ENCODE measurements at regions of chr21 and their contacts with region 1.

Region 1: GRCh38 chr21:33924079-33924765 is 8.6 kb upstream of the ATP5PO start:
- DNase-seq: peak; percentile 82 to 98 (median 91)
- ATAC-seq: peak; percentile 96
- H3K4me3 ChIP-seq: no peak overlapping the region
- H3K4me3 Mint-ChIP-seq: no peak overlapping the region
- H3K27ac ChIP-seq: no peak overlapping the region
- H3K27ac Mint-ChIP-seq: peak overlapping the region; percentile 61
- H3K4me1 ChIP-seq: peaks cover 11% of the 10 kb centered on the region
- H3K4me1 Mint-ChIP-seq: peaks cover 12% of the 10 kb centered on the region
- H3K27me3 ChIP-seq: no peaks in the 10 kb centered on the region
- H3K27me3 Mint-ChIP-seq: no peaks in the 10 kb centered on the region
- CTCF ChIP-seq: peak; percentile 88

Region 2: DNA sequence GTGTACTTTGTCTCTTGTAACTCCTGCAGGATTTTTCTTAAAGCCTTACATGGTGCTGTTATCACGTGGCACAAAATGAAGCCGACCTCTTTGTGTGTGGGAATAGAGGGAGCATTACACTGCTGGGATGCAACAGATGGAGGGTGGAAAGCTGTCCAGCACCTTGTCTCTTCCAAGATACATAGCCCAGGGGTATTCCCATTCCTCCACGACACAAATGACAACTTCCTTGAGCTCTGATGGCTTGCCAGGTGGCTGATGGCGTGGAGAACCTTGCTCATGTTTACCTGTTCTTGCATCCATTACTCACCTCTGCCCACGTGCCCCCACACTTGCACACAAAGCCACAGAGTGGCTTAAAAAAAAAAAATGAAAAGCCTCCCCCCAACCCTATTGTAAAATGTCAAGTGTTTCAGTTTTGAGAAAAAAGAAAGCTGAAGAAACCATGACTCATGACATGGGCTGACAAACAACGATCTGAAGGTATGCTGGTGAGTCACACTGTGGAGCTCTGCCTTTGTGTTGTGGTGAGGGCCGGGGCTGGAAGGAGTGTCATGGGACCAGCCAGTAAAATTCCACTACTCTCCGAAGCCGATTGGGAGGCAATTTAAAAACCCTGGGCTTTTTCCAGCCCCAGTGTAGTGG is 23.4 kb after region 1 on chr21:
- CTCF ChIA-PET with region 1: interaction called, 114 read pairs
- POLR2A ChIA-PET with region 1: interaction called, 60 read pairs
- intact Hi-C with region 1: no loop called
- DNase-seq: peak; percentile 68 to 97 (median 80)
- ATAC-seq: peak; percentile 59
- H3K4me3 ChIP-seq: peak overlapping the region; percentile 36
- H3K4me3 Mint-ChIP-seq: peak overlapping the region; percentile 65
- H3K27ac ChIP-seq: peak overlapping the region; percentile 93 to 98
- H3K27ac Mint-ChIP-seq: peak overlapping the region; percentile 93
- H3K4me1 ChIP-seq: peaks cover 76% of the 10 kb centered on the region
- H3K4me1 Mint-ChIP-seq: peaks cover 75% of the 10 kb centered on the region
- H3K27me3 ChIP-seq: no peaks in the 10 kb centered on the region
- H3K27me3 Mint-ChIP-seq: no peaks in the 10 kb centered on the region
- CTCF ChIP-seq: no peak

Region 3: DNA sequence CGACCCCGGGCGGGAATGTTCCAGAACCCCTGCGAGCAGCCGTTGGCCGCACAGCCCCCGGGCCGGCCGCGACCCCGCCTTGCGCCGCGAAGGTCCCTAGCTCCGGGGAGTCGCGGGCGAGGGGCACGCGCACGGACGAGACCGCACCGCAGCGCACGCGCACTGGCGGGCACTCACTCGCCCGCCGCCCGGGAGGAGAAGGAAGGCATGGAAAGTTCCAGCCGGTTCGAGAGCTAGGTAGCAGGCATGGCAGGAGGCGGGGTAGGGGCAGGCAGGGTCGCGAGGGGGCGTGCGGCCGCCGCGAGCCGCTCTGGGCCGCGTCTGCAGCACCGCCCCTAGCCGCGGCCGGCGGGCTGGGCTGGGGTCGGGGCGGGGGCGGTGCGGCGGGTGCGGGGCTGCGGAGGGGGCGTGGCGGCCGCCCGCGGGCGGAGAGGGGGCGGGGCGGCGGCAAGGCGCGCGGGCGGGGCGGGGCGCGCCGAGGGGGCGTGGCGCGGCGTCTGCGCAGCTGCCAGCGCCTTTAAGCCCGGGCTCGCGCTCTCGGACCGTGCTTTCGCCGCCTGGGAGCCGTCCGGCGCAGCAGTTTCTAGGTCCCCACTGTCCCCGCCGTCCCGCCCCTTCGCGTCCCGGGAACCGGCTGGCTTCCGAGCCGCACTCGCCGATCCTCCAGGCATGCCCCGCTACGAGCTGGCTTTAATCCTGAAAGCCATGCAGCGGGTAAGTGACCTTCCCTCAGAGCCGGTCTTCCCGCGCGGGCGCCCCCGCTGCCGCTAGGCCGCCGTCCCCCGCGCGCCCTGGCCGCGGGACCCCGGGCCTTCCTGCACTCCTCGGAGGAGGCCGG is 149.0 kb after region 1 on chr21 and contains the starts of genes MRPS6 and SLC5A3:
- CTCF ChIA-PET with region 1: interaction called, 34 read pairs
- POLR2A ChIA-PET with region 1: interaction called, 14 read pairs
- intact Hi-C with region 1: loop called (anchors 2 to 5 kb)
- DNase-seq: peak; percentile 40 to 91 (median 64)
- ATAC-seq: peak; percentile 66
- H3K4me3 ChIP-seq: peak within 1 kb of the TSS; percentile 74
- H3K4me3 Mint-ChIP-seq: peak within 1 kb of the TSS; percentile 95
- H3K27ac ChIP-seq: peak within 1 kb of the TSS; percentile 56 to 70
- H3K27ac Mint-ChIP-seq: peak within 1 kb of the TSS; percentile 88
- H3K4me1 ChIP-seq: peaks cover 34% of the 10 kb centered on the region
- H3K4me1 Mint-ChIP-seq: peaks cover 50% of the 10 kb centered on the region
- H3K27me3 ChIP-seq: no peaks in the 10 kb centered on the region
- H3K27me3 Mint-ChIP-seq: no peaks in the 10 kb centered on the region
- CTCF ChIP-seq: no peak
- total RNA-seq, gene MRPS6: 13.5 to 14.4 TPM
- total RNA-seq, gene SLC5A3: 4.6 to 4.9 TPM

Region 4: DNA sequence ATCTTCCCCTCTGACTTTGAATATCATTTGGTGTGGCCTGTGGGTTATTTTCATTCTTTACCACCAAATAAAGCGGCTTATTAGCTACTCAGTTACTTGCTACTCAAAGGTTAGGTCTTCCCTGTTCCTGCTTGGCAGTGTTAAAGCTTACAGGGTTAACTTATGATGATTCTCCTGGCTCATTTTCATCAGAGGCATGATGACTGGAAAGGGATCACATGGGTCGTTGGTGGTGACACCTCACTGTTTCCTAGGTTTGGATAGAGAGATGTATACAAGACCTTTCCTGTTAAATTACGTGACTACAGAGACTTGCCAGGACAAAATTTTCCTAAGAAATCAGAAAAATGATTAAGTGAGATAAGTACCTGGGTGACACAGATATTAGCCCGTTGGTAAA is 176.6 kb after region 1 on chr21:
- CTCF ChIA-PET with region 1: interaction called, 11 read pairs
- POLR2A ChIA-PET with region 1: no interaction called
- intact Hi-C with region 1: no loop called
- DNase-seq: no peak
- ATAC-seq: no peak
- H3K4me3 ChIP-seq: no peak overlapping the region
- H3K4me3 Mint-ChIP-seq: no peak overlapping the region
- H3K27ac ChIP-seq: no peak overlapping the region
- H3K27ac Mint-ChIP-seq: peak overlapping the region; percentile 25
- H3K4me1 ChIP-seq: peaks cover 2% of the 10 kb centered on the region
- H3K4me1 Mint-ChIP-seq: peaks cover 97% of the 10 kb centered on the region
- H3K27me3 ChIP-seq: no peaks in the 10 kb centered on the region
- H3K27me3 Mint-ChIP-seq: no peaks in the 10 kb centered on the region
- CTCF ChIP-seq: no peak

Region 5: DNA sequence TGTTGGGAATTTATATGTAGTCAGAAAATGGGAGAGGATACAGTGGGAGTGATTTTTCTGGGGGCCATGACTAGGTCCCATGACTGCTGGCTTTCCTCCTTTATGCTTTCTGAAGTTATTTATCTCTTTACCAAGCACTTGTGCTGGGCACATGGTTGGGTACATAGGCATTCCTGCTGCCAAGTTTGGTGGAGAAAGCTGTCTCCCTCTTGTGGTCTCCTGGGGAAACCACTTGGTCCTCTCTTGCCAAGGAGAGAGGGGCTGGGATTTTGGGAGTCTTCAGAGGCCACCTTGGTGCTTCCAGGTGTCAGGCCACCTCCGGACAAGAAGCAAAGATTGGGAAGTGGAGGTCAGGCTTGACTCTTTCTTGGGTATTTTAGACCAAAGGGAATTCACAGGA is 319.3 kb after region 1 on chr21:
- CTCF ChIA-PET with region 1: interaction called, 6 read pairs
- POLR2A ChIA-PET with region 1: no interaction called
- intact Hi-C with region 1: loop called (anchors 2 kb)
- DNase-seq: peak in 5 of 14 experiments; percentile 11 to 52 (median 43)
- ATAC-seq: no peak
- H3K4me3 ChIP-seq: no peak overlapping the region
- H3K4me3 Mint-ChIP-seq: no peak overlapping the region
- H3K27ac ChIP-seq: no peak overlapping the region
- H3K27ac Mint-ChIP-seq: no peak overlapping the region
- H3K4me1 ChIP-seq: no peaks in the 10 kb centered on the region
- H3K4me1 Mint-ChIP-seq: no peaks in the 10 kb centered on the region
- H3K27me3 ChIP-seq: no peaks in the 10 kb centered on the region
- H3K27me3 Mint-ChIP-seq: no peaks in the 10 kb centered on the region
- CTCF ChIP-seq: peak; percentile 35

Region 6: DNA sequence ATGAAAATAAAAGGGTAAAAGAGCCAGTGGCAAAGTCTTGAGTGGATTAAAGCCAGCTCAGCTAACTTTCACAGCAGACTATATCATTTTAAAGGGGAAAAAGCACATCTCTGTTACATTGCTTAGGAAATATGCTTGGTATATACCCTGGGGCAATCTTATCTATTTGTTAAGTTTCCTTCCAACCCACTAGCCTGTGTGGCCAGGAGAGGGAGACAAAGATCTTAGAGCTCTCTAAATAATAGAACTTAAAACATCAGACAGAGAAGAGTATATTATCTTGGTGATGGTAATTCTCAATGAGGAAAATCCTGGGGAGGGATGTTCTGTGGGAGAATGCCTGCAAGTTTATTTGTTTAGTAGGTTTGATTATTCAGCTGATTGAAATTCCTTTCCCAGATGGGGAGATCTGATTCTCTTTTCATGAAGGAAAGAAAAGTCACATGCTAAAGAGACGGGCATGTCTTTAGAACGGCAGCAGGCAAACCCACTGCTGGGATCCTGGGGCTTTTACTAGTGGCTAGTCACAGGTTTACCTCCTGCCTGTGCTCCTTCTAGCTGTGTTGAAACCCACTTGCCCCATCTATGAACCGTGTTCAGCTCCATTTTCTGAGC is 443.2 kb after region 1 on chr21:
- CTCF ChIA-PET with region 1: interaction called, 12 read pairs
- POLR2A ChIA-PET with region 1: no interaction called
- intact Hi-C with region 1: no loop called
- DNase-seq: peak in 11 of 14 experiments; percentile 6 to 71 (median 34)
- ATAC-seq: peak; percentile 95
- H3K4me3 ChIP-seq: no peak overlapping the region
- H3K4me3 Mint-ChIP-seq: no peak overlapping the region
- H3K27ac ChIP-seq: no peak overlapping the region
- H3K27ac Mint-ChIP-seq: no peak overlapping the region
- H3K4me1 ChIP-seq: no peaks in the 10 kb centered on the region
- H3K4me1 Mint-ChIP-seq: no peaks in the 10 kb centered on the region
- H3K27me3 ChIP-seq: no peaks in the 10 kb centered on the region
- H3K27me3 Mint-ChIP-seq: peaks cover 12% of the 10 kb centered on the region
- CTCF ChIP-seq: peak; percentile 66

Region 7: DNA sequence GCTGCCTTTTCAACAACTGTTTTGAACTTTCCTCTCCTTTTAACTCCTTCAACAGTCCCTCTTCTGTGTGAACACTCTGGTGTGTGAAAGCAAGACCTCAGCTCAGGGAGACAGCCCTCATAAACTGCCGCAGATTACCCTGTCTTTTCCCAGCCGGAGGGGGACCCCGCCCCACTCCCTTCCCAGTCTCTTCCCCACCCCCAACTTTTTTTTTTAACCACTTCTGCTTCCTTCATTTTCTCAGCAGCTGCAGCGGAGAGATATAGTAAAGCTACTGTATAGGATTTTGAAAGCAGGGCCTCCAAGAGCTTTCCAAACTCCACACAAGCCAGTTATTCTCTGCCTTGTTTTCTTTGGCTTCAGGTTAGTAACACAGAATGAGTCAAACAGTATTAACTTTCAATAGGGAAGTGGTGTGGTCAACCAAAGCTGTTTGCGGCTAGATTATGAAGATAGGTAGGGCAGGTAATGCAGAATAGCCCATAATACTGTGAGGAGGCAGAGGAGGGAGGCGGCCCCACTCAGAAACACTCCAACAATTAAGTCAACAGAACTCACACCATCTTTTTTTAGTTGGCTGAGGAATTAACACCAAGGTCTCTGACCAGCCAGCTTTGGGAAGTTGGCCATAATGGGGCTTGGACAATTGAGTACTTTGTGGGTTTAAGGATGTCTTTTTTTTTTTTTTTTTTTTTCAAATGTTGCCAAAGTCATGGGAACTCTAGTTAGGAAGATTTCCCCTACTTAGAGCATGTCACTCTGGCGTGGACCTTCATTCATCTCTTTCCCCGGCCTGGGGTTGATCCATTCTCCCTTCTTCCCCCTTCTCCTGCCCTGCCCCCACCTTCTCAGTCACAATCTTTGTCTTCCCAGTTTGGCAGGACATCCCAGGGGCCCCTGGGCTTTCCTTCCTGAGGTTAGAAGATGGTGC is 921.6 kb after region 1 on chr21:
- CTCF ChIA-PET with region 1: no interaction called
- POLR2A ChIA-PET with region 1: no interaction called
- intact Hi-C with region 1: no loop called
- DNase-seq: peak in 5 of 14 experiments; percentile 8 to 63 (median 53)
- ATAC-seq: peak; percentile 51
- H3K4me3 ChIP-seq: no peak overlapping the region
- H3K4me3 Mint-ChIP-seq: peak overlapping the region; percentile 4
- H3K27ac ChIP-seq: no peak overlapping the region
- H3K27ac Mint-ChIP-seq: peak overlapping the region; percentile 78
- H3K4me1 ChIP-seq: peaks cover 35% of the 10 kb centered on the region
- H3K4me1 Mint-ChIP-seq: peaks cover 42% of the 10 kb centered on the region
- H3K27me3 ChIP-seq: no peaks in the 10 kb centered on the region
- H3K27me3 Mint-ChIP-seq: no peaks in the 10 kb centered on the region
- CTCF ChIP-seq: no peak

Measured in CD4-positive, alpha-beta T cell (primary cell).